Activated CD8-positive, alpha-beta T cell treated with anti-CD3 and anti-CD28 coated beads, Interleukin-2, amount 10 ng/mL, durations not matched to agents 7 days and 5 days (primary cell): ENCODE measurements at regions of chr1 and their contacts with region 1.

Region 1: GRCh38 chr1:70410604-70411359 is at the start of gene CTH:
- DNase-seq: peak; percentile 96
- ATAC-seq: peak; percentile 97
- H3K4me3 Mint-ChIP-seq: peak within 1 kb of the TSS; percentile 96
- H3K27ac Mint-ChIP-seq: peak within 1 kb of the TSS; percentile 97
- H3K4me1 Mint-ChIP-seq: peaks cover 18% of the 10 kb centered on the region
- H3K27me3 Mint-ChIP-seq: peaks cover 5% of the 10 kb centered on the region
- total RNA-seq, gene CTH: 4.1 to 5.9 TPM

Region 2: GRCh38 chr1:70205434-70206118 is 205.2 kb before region 1 on chr1 and contains the start of gene LRRC40:
- CTCF ChIA-PET with region 1: no interaction called
- POLR2A ChIA-PET with region 1: interaction called, 12 read pairs
- DNase-seq: peak; percentile 97
- ATAC-seq: peak; percentile 96
- H3K4me3 Mint-ChIP-seq: peak within 1 kb of the TSS; percentile 99
- H3K27ac Mint-ChIP-seq: peak within 1 kb of the TSS; percentile 100
- H3K4me1 Mint-ChIP-seq: peaks cover 60% of the 10 kb centered on the region
- H3K27me3 Mint-ChIP-seq: no peaks in the 10 kb centered on the region
- total RNA-seq, gene LRRC40: 22.5 to 22.7 TPM

Region 3: GRCh38 chr1:70221241-70222121 is 189.3 kb before region 1 on chr1 and contains the start of gene SRSF11:
- CTCF ChIA-PET with region 1: no interaction called
- POLR2A ChIA-PET with region 1: interaction called, 13 read pairs
- DNase-seq: peak; percentile 97
- ATAC-seq: peak; percentile 96
- H3K4me3 Mint-ChIP-seq: peak within 1 kb of the TSS; percentile 93
- H3K27ac Mint-ChIP-seq: peak within 1 kb of the TSS; percentile 97
- H3K4me1 Mint-ChIP-seq: peaks cover 44% of the 10 kb centered on the region
- H3K27me3 Mint-ChIP-seq: no peaks in the 10 kb centered on the region
- total RNA-seq, gene SRSF11: 165 to 169 TPM

Region 4: DNA sequence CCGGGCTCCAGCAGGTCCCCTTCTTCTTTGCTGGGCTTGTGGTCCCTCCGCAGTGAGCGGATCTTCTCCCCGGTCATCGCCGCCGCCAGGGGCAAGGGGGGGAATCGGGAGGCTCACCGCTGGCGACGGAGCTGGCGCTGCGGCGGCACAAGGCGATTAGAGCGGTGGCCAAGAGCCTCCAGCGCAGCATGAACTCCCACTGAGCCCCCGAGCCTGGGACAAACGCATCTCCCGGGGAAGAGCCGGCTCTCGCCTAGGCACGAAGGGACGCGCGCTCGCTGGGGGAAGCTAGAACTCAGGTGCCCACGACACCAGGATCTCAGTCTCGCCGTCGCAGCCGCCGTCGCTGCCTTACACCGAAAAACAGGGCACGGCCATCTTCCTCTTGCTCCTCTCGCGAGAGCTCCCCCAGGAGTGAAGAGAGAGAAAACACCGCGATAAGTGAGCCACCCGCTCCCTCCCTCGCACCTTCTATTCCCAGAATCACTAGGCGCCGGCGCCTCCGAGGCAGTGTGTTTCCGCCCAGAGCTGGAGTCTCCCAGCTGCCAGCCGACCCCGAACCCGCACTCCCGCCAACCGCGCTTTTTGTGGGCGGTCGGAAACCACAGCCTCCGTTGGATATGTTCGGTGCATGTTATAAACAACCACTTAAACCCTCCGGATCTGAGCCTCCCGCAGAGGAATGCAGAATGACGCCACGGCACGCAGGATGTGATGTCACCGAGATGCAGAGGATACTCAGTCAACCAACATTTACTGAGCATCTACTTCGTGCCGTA is 56.3 kb before region 1 on chr1 and contains the start of gene ANKRD13C:
- CTCF ChIA-PET with region 1: interaction called, 23 read pairs
- POLR2A ChIA-PET with region 1: interaction called, 162 read pairs
- DNase-seq: peak; percentile 95
- ATAC-seq: peak; percentile 91
- H3K4me3 Mint-ChIP-seq: peak within 1 kb of the TSS; percentile 91
- H3K27ac Mint-ChIP-seq: peak within 1 kb of the TSS; percentile 93
- H3K4me1 Mint-ChIP-seq: peaks cover 37% of the 10 kb centered on the region
- H3K27me3 Mint-ChIP-seq: no peaks in the 10 kb centered on the region
- total RNA-seq, gene ANKRD13C: 25.0 to 26.8 TPM

Region 5: GRCh38 chr1:70552662-70553566 is 142.1 kb after region 1 on chr1:
- CTCF ChIA-PET with region 1: no interaction called
- POLR2A ChIA-PET with region 1: no interaction called
- DNase-seq: no peak
- ATAC-seq: no peak
- H3K4me3 Mint-ChIP-seq: no peak overlapping the region
- H3K27ac Mint-ChIP-seq: no peak overlapping the region
- H3K4me1 Mint-ChIP-seq: no peaks in the 10 kb centered on the region
- H3K27me3 Mint-ChIP-seq: peaks cover 5% of the 10 kb centered on the region